ENCODE measurements at regions of chr11 and their contacts with region 1.

Region 1: GRCh38 chr11:57644748-57645688 is 4.7 kb downstream of the YPEL4 start:
- DNase-seq: peak; percentile 82 to 88 (median 87)
- H3K4me3 ChIP-seq: no peak overlapping the region
- H3K27ac ChIP-seq: no peak overlapping the region
- H3K4me1 ChIP-seq: peaks cover 21 to 93% (median 66%) of the 10 kb centered on the region in 4 experiments
- H3K27me3 ChIP-seq: peaks cover 0 to 41% (median 19%) of the 10 kb centered on the region in 5 experiments

Region 2: DNA sequence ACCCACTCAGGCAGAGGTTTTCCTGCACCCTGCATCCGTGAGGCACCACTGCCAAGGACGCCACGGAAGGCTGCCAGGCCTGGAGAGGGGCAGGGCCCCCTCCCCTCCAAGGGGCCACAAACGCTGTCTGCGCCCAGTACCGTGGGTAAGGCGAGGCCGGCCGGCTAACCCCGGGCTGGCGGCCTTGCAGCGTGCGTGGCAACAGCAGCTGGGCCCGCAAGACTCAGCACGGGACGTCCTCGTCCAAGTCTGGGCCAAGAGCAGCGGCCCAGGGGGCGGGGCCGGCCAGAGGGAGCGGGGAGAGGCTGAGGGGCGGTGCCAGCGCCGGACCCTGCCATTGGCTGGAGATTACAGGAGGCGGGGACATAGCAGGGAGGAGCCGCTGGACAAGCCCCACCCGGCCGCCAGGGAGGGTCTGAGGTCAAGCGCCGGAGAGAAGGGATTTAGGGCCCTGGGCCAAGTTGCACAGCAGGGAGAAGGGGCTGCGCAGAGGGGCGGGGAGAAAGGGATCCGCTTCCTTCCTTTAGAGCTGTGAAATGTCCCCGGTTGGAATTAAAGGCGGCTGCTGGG is 145.5 kb before region 1 on chr11:
- CTCF ChIA-PET with region 1: interaction called, 89 read pairs
- POLR2A ChIA-PET with region 1: no interaction called
- DNase-seq: peak; percentile 64 to 72 (median 68)
- H3K4me3 ChIP-seq: peak overlapping the region in 4 of 7 experiments; percentile 29 to 58 (median 54)
- H3K27ac ChIP-seq: no peak overlapping the region
- H3K4me1 ChIP-seq: peaks cover 0 to 11% (median 5%) of the 10 kb centered on the region in 4 experiments
- H3K27me3 ChIP-seq: no peaks in the 10 kb centered on the region

Region 3: GRCh38 chr11:57562596-57562995 is 82.4 kb before region 1 on chr11:
- CTCF ChIA-PET with region 1: interaction called, 401 read pairs
- POLR2A ChIA-PET with region 1: interaction called, 18 read pairs
- DNase-seq: no peak
- H3K4me3 ChIP-seq: no peak overlapping the region
- H3K27ac ChIP-seq: peak overlapping the region; percentile 13 to 40
- H3K4me1 ChIP-seq: peaks cover 10 to 23% (median 19%) of the 10 kb centered on the region in 4 experiments
- H3K27me3 ChIP-seq: no peaks in the 10 kb centered on the region

Region 4: DNA sequence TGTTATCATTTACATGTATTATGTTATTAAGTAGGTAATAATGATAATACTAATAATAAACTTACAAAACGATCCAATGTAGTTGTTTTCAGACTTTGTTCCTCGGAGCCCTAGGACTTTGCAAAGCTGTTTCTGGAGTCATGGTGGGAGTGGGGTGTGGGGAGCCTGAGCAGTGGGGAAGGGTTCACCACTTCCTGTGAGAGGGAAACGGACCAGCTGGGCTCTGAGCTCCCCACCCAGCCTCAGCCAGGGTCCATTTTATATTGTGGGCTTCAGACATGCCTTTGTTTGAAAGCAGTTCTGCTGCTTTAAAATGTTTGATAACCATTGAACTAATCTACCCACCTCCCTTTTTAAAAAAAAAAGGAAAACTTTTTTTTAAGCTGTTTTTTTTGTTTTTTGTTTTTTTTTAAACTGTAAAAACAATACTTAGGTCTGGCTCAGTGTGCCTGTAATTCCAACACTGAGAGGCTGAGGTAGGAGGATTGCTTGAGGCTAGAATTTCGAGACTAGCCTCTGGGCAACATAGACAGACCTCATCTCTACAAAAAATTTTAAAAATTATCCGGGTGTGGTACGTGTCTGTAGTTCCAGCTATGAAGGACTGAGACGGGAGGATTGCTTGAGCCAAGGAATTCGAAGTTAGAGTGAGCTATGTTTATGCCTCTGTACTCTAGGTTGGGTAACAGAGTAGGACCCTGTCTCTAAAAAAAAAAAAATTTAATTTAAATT is 40.6 kb before region 1 on chr11:
- CTCF ChIA-PET with region 1: interaction called, 105 read pairs
- POLR2A ChIA-PET with region 1: no interaction called
- DNase-seq: peak; percentile 48 to 83 (median 73)
- H3K4me3 ChIP-seq: peak overlapping the region in 3 of 7 experiments; percentile 28 to 51 (median 45)
- H3K27ac ChIP-seq: peak overlapping the region in 1 of 2 experiments; percentile 66
- H3K4me1 ChIP-seq: peaks cover 0 to 22% (median 15%) of the 10 kb centered on the region in 4 experiments
- H3K27me3 ChIP-seq: no peaks in the 10 kb centered on the region

Region 5: GRCh38 chr11:57657194-57658022 is 12.4 kb after region 1 on chr11 and contains the start of gene CLP1:
- CTCF ChIA-PET with region 1: interaction called, 25 read pairs
- POLR2A ChIA-PET with region 1: interaction called, 4 read pairs
- DNase-seq: peak; percentile 99
- H3K4me3 ChIP-seq: peak within 1 kb of the TSS; percentile 75 to 98 (median 95)
- H3K27ac ChIP-seq: peak within 1 kb of the TSS; percentile 62 to 85
- H3K4me1 ChIP-seq: peaks cover 18 to 30% (median 24%) of the 10 kb centered on the region in 4 experiments
- H3K27me3 ChIP-seq: no peaks in the 10 kb centered on the region